HEK293 (cell line): ENCODE measurements at regions of chr11 and their contacts with region 1.

Region 1: DNA sequence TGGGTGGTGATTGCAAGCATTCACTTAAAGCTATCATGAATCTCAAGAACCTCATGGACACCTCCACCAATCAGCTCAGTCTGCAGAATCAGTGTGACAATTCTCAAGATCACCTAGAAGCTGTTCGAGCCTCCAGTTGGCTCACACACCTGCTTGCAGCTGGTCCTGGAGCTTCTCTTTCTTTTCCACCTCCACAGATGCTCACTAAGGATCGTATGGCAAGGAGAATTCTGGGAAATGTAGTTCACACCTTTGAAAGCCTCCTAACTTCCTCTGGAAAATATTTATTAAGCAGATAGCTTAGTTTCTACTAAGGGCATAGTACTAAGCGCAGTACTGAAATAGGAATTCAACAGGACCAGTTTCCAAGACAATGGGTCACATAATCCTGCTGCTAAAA is 26.2 kb downstream of the FSHB start:
- H3K4me3 ChIP-seq: no peak overlapping the region
- H3K27ac ChIP-seq: no peak overlapping the region
- H3K4me1 ChIP-seq: no peaks in the 10 kb centered on the region
- CTCF ChIP-seq: no peak

Region 2: DNA sequence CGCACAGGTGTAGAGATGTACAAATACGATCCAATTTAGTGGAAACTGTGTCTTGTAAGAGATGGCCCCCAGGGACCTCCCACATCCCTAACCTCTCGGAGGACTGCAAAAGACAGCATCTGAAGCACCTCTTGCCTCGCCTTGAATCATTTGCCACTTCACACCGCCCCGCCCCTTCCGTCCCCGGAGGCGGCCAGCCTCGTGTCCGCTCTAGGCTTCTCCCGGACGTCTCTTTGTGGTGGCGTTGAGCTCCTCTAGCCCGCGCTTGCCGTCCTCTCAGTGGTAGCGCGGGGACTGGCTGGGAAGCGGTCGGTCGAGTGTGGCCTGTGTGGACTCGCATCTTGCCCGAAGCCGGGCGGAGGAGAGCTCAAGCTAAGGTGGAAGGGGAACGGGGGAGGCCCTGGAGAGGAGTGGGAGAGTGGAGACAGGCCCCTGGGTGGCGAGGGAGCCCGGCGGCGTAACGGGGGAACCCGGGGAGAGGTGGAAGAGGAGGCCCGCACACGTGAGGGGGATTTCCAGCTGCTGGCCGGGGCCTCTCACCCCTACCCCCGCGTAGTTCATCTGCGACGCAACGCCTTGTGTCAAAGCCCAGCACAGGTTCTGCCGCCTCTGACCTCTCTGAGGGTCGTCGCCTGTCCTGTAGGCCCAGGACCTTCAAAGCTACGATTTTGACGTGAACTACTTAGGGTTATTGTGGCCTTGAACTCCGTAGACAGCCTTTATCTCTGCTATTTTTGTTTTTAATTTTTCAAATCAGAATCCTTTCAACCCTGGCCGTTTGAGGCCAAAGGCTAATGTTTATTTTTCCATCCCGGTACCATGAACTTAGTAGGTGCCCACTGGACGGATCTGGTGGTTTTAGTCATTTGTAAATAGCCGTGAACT is 66.0 kb after region 1 on chr11 and contains the start of gene ARL14EP:
- CTCF ChIA-PET with region 1: no interaction called
- POLR2A ChIA-PET with region 1: interaction called, 10 read pairs
- H3K4me3 ChIP-seq: peak within 1 kb of the TSS; percentile 86
- H3K27ac ChIP-seq: peak within 1 kb of the TSS; percentile 24
- H3K4me1 ChIP-seq: no peaks in the 10 kb centered on the region
- CTCF ChIP-seq: no peak